Activated CD8-positive, alpha-beta T cell treated with anti-CD3 and anti-CD28 coated beads, Interleukin-2, amount 10 ng/mL, durations not matched to agents 7 days and 5 days (primary cell): ENCODE measurements at regions of chr19 and their contacts with region 1.

Region 1: GRCh38 chr19:43555185-43555770 is 20.0 kb downstream of the XRCC1 start:
- DNase-seq: peak; percentile 91
- ATAC-seq: peak; percentile 95
- H3K4me3 Mint-ChIP-seq: no peak overlapping the region
- H3K27ac Mint-ChIP-seq: peak overlapping the region; percentile 6
- H3K4me1 Mint-ChIP-seq: peaks cover 8% of the 10 kb centered on the region
- H3K27me3 Mint-ChIP-seq: no peaks in the 10 kb centered on the region

Region 2: DNA sequence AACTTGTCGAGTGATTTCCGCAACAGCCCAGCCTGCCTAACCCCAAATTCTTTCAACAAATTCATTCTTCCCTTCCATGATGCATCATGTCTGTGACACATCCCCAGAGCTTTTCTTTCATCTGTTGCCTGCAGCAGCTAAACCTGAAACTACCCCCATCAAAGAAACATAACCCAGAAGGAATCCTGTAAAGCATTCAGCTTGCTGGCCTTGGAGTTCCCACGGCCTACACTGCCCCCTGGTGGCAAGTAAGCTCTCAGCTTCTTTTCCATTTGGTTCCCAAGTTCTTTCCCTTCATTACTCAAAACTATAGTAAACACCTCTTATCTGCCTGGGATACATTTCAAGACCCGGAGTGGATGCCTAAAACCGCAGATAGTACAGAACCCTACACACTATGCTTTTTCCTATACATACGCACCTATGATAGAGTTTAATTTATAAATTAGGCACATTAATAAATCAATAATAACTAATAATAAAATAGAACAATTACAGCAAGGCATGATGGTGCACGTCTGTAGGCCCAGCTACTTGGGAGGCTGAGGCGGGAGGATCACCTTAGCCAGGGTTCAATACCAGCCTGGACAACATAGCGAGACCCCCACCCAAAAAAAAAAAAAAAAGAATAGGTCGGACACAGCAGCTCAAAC is 35.7 kb before region 1 on chr19:
- CTCF ChIA-PET with region 1: interaction called, 12 read pairs
- POLR2A ChIA-PET with region 1: no interaction called
- DNase-seq: peak; percentile 83
- ATAC-seq: peak; percentile 71
- H3K4me3 Mint-ChIP-seq: no peak overlapping the region
- H3K27ac Mint-ChIP-seq: peak overlapping the region; percentile 7
- H3K4me1 Mint-ChIP-seq: peaks cover 14% of the 10 kb centered on the region
- H3K27me3 Mint-ChIP-seq: no peaks in the 10 kb centered on the region

Region 3: GRCh38 chr19:43532962-43533545 is 22.2 kb before region 1 on chr19 and contains the start of gene ZNF575:
- CTCF ChIA-PET with region 1: interaction called, 43 read pairs
- POLR2A ChIA-PET with region 1: interaction called, 6 read pairs
- DNase-seq: peak; percentile 91
- ATAC-seq: peak; percentile 66
- H3K4me3 Mint-ChIP-seq: peak within 1 kb of the TSS; percentile 87
- H3K27ac Mint-ChIP-seq: peak within 1 kb of the TSS; percentile 98
- H3K4me1 Mint-ChIP-seq: peaks cover 27% of the 10 kb centered on the region
- H3K27me3 Mint-ChIP-seq: no peaks in the 10 kb centered on the region
- total RNA-seq, gene ZNF575: 3.4 to 3.7 TPM

Region 4: DNA sequence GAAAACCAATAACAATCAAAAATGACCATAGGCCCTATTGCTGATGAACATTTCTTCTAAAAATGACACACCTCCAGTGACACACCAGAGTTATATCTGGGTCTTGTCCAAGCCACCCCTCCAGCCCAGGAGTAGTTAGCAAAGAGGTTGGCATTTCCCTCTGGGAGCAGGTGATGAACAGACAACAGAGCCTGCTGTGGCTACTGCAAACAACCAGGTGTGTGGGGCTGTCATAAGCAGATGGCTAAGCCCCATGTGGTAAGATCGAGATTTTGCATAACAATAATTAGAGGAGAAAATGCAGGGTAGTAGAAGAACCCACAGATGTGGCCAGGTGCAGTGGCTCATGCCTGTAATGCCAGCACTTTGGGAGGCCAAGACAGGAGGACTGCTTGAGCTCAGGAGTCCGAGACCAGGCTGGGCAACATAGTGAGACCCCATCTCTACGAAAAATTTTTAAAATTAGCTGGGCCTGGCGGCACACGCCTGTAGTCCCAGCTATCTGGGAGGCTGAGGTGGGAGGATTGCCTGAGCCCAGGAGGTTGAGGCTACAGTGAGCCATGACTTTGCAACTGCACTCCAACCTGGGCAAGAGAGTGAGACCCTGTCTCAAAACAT is 15.0 kb after region 1 on chr19:
- CTCF ChIA-PET with region 1: interaction called, 30 read pairs
- POLR2A ChIA-PET with region 1: interaction called, 5 read pairs
- DNase-seq: no peak
- ATAC-seq: peak; percentile 12
- H3K4me3 Mint-ChIP-seq: no peak overlapping the region
- H3K27ac Mint-ChIP-seq: no peak overlapping the region
- H3K4me1 Mint-ChIP-seq: peaks cover 20% of the 10 kb centered on the region
- H3K27me3 Mint-ChIP-seq: no peaks in the 10 kb centered on the region

Region 5: GRCh38 chr19:43584484-43584883 is 29.2 kb after region 1 on chr19:
- CTCF ChIA-PET with region 1: interaction called, 28 read pairs
- POLR2A ChIA-PET with region 1: interaction called, 3 read pairs
- DNase-seq: no peak
- ATAC-seq: no peak
- H3K4me3 Mint-ChIP-seq: no peak overlapping the region
- H3K27ac Mint-ChIP-seq: peak overlapping the region; percentile 86
- H3K4me1 Mint-ChIP-seq: peaks cover 45% of the 10 kb centered on the region
- H3K27me3 Mint-ChIP-seq: no peaks in the 10 kb centered on the region